Head of caudate nucleus (tissue), 42 donors: ENCODE measurements at regions of chr19 and their contacts with region 1.

Region 1: GRCh38 chr19:16628183-16628983 is at the start of gene MED26:
- DNase-seq: peak; percentile 85 to 97 (median 95)

Region 2: GRCh38 chr19:16659831-16660708 is 31.7 kb after region 1 on chr19 and contains the start of gene SMIM7:
- intact Hi-C with region 1: loop called (anchors 1 kb)
- DNase-seq: peak; percentile 97 to 100 (median 99)

Region 3: GRCh38 chr19:17170538-17171297 is 542.3 kb after region 1 on chr19:
- intact Hi-C with region 1: no loop called
- DNase-seq: no peak